ENCODE measurements at regions of chr2 and their contacts with region 1.

Region 1: GRCh38 chr2:47344890-47345589 is 57.9 kb upstream of the MSH2 start:
- DNase-seq: peak; percentile 99 to 100
- H3K4me3 ChIP-seq: peak overlapping the region; percentile 39
- H3K4me3 Mint-ChIP-seq: peak overlapping the region; percentile 84
- H3K27ac Mint-ChIP-seq: peak overlapping the region; percentile 66
- H3K4me1 ChIP-seq: peaks cover 55% of the 10 kb centered on the region
- H3K4me1 Mint-ChIP-seq: peaks cover 42% of the 10 kb centered on the region
- H3K27me3 ChIP-seq: no peaks in the 10 kb centered on the region
- H3K27me3 Mint-ChIP-seq: no peaks in the 10 kb centered on the region
- CTCF ChIP-seq: peak; percentile 34 to 39

Region 2: DNA sequence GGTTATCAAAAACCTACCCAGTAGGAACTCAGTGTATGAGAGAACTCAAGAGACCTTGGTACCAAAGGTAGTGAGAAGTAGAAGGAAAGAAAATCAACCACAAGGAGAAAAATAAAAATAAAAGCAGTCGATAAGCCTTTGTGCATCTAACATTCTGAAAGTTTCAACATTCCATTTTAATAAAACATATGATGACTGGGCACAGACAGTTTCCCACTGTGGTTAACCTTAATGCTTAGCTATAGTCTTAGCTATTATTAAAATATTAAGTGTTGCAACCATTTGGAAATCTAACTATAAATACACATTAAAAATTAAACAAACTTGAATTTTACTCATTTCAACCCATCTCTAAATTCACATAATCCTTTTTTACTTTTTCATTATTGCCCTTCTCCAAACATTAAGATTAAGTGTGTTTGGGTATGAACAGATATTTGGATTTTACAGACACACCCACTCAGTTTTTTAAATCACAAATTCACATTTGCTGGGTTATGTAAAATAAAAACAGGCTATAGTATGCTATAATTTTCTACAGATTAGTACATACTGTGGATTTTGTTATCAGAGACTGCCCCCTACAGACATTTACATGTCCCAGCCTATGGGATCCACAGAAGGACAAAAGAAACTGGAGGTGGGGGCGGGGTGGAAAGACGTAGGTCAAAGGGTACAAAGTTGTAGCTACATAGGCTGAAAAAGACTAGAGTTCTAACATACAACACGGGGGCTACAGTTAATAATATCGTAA is 1766.8 kb before region 1 on chr2:
- CTCF ChIA-PET with region 1: no interaction called
- POLR2A ChIA-PET with region 1: interaction called, 17 read pairs
- intact Hi-C with region 1: no loop called
- DNase-seq: peak in 1 of 2 experiments; percentile 22
- H3K4me3 ChIP-seq: no peak overlapping the region
- H3K4me3 Mint-ChIP-seq: no peak overlapping the region
- H3K27ac Mint-ChIP-seq: no peak overlapping the region
- H3K4me1 ChIP-seq: no peaks in the 10 kb centered on the region
- H3K4me1 Mint-ChIP-seq: peaks cover 13% of the 10 kb centered on the region
- H3K27me3 ChIP-seq: no peaks in the 10 kb centered on the region
- H3K27me3 Mint-ChIP-seq: no peaks in the 10 kb centered on the region
- CTCF ChIP-seq: peak in 1 of 2 experiments; percentile 45

Region 3: GRCh38 chr2:47357483-47357882 is 12.4 kb after region 1 on chr2:
- CTCF ChIA-PET with region 1: interaction called, 10 read pairs
- POLR2A ChIA-PET with region 1: interaction called, 20 read pairs
- intact Hi-C with region 1: loop called (anchors 2 kb)
- DNase-seq: no peak
- H3K4me3 ChIP-seq: no peak overlapping the region
- H3K4me3 Mint-ChIP-seq: no peak overlapping the region
- H3K27ac Mint-ChIP-seq: peak overlapping the region; percentile 39
- H3K4me1 ChIP-seq: peaks cover 38% of the 10 kb centered on the region
- H3K4me1 Mint-ChIP-seq: peaks cover 27% of the 10 kb centered on the region
- H3K27me3 ChIP-seq: no peaks in the 10 kb centered on the region
- H3K27me3 Mint-ChIP-seq: no peaks in the 10 kb centered on the region
- CTCF ChIP-seq: no peak

Region 4: GRCh38 chr2:47373747-47374146 is 28.7 kb after region 1 on chr2:
- CTCF ChIA-PET with region 1: interaction called, 5 read pairs
- POLR2A ChIA-PET with region 1: interaction called, 11 read pairs
- intact Hi-C with region 1: no loop called
- DNase-seq: peak; percentile 74 to 78
- H3K4me3 ChIP-seq: no peak overlapping the region
- H3K4me3 Mint-ChIP-seq: no peak overlapping the region
- H3K27ac Mint-ChIP-seq: no peak overlapping the region
- H3K4me1 ChIP-seq: peaks cover 30% of the 10 kb centered on the region
- H3K4me1 Mint-ChIP-seq: peaks cover 11% of the 10 kb centered on the region
- H3K27me3 ChIP-seq: no peaks in the 10 kb centered on the region
- H3K27me3 Mint-ChIP-seq: no peaks in the 10 kb centered on the region
- CTCF ChIP-seq: peak; percentile 47 to 83

Region 5: GRCh38 chr2:47386551-47386950 is 41.5 kb after region 1 on chr2:
- CTCF ChIA-PET with region 1: interaction called, 15 read pairs
- POLR2A ChIA-PET with region 1: interaction called, 5 read pairs
- intact Hi-C with region 1: no loop called
- DNase-seq: no peak
- H3K4me3 ChIP-seq: no peak overlapping the region
- H3K4me3 Mint-ChIP-seq: no peak overlapping the region
- H3K27ac Mint-ChIP-seq: no peak overlapping the region
- H3K4me1 ChIP-seq: no peaks in the 10 kb centered on the region
- H3K4me1 Mint-ChIP-seq: no peaks in the 10 kb centered on the region
- H3K27me3 ChIP-seq: no peaks in the 10 kb centered on the region
- H3K27me3 Mint-ChIP-seq: no peaks in the 10 kb centered on the region
- CTCF ChIP-seq: no peak

Region 6: GRCh38 chr2:47402805-47403608 is 58.0 kb after region 1 on chr2 and contains the start of gene MSH2:
- CTCF ChIA-PET with region 1: interaction called, 10 read pairs
- POLR2A ChIA-PET with region 1: interaction called, 18 read pairs
- intact Hi-C with region 1: no loop called
- DNase-seq: peak; percentile 96
- H3K4me3 ChIP-seq: peak within 1 kb of the TSS; percentile 85
- H3K4me3 Mint-ChIP-seq: peak within 1 kb of the TSS; percentile 97
- H3K27ac Mint-ChIP-seq: peak within 1 kb of the TSS; percentile 91
- H3K4me1 ChIP-seq: peaks cover 6% of the 10 kb centered on the region
- H3K4me1 Mint-ChIP-seq: peaks cover 9% of the 10 kb centered on the region
- H3K27me3 ChIP-seq: no peaks in the 10 kb centered on the region
- H3K27me3 Mint-ChIP-seq: no peaks in the 10 kb centered on the region
- CTCF ChIP-seq: peak in 1 of 2 experiments; percentile 3
- total RNA-seq, gene MSH2: 70.5 and 72.5 TPM in 2 replicates